ENCODE measurements at regions of chr6 and their contacts with region 1.

Region 1: DNA sequence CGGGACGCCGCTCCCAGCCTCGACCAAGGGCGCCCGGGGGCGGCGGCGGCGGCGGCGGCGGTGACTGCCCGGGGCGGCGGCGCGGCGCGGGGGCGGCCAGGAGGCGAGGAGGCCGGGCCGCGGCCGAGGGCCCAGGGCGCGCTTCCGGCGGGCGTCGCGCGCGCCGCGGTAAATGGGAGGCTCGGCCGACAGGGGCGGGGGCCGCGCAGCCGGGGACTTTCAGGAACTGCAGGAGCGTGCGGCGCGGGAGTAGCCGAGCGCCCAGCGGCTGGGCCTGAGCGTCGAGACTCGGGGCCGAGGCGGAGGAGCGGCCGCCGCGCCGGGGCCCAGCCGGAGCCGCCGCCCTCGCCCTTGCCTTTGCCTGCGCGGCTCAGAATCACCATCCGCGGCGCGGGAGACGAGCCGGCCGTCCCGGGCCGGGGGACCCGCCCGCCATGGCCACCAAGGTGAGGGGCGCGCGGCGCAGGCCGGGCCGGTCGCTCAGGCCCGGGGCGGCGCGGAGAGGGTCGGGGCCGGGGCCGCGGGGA is at the start of gene SNX9:
- DNase-seq: peak; percentile 84
- ATAC-seq: peak; percentile 59
- H3K4me3 Mint-ChIP-seq: peak within 1 kb of the TSS; percentile 92
- H3K27ac Mint-ChIP-seq: peak within 1 kb of the TSS; percentile 99
- H3K4me1 Mint-ChIP-seq: peaks cover 48% of the 10 kb centered on the region
- H3K27me3 Mint-ChIP-seq: peaks cover 11% of the 10 kb centered on the region
- total RNA-seq, gene SNX9: 39.4 to 43.3 TPM

Region 2: DNA sequence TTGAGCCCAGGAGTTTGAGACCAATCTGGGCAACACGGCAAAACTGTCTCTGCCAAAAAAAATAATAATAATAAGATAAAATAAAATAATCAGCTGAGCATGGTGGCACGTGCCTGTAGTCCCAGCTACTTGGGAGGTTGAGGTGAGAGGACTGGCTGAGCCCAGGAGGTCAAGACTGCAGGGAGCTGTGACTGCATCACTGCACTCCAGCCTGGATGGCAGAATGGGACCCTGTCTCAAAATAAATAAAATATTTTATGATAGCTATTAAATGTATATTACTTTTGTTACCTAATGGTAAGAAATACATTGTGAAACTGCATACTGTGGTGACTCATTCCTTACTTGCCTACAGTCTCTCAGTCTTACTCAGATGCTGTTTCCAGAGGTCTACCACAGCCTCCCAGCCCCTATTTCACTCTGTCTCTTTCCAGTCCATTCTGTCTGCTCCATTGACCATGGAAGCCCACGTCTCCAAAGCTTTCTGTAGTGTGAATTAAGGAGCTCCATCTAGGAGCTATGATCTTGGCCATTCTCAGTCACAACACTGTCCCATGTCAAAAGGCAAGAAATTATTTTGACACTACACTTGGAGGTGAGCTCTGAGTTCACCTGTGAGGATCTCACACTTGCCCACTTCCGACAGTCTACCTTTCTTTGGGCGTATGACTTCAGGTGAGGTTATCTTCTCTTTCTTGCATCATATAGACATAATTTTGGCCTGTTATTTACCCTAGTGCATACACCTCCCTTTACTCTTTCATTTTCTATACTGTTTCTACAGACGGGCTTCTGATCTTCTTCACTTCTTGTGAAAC is 22.4 kb before region 1 on chr6:
- CTCF ChIA-PET with region 1: interaction called, 3 read pairs
- POLR2A ChIA-PET with region 1: interaction called, 5 read pairs
- intact Hi-C with region 1: loop called (anchors 1 to 2 kb)
- DNase-seq: peak; percentile 70
- ATAC-seq: peak; percentile 89
- H3K4me3 Mint-ChIP-seq: peak overlapping the region; percentile 41
- H3K27ac Mint-ChIP-seq: peak overlapping the region; percentile 72
- H3K4me1 Mint-ChIP-seq: peaks cover 62% of the 10 kb centered on the region
- H3K27me3 Mint-ChIP-seq: peaks cover 5% of the 10 kb centered on the region

Region 3: DNA sequence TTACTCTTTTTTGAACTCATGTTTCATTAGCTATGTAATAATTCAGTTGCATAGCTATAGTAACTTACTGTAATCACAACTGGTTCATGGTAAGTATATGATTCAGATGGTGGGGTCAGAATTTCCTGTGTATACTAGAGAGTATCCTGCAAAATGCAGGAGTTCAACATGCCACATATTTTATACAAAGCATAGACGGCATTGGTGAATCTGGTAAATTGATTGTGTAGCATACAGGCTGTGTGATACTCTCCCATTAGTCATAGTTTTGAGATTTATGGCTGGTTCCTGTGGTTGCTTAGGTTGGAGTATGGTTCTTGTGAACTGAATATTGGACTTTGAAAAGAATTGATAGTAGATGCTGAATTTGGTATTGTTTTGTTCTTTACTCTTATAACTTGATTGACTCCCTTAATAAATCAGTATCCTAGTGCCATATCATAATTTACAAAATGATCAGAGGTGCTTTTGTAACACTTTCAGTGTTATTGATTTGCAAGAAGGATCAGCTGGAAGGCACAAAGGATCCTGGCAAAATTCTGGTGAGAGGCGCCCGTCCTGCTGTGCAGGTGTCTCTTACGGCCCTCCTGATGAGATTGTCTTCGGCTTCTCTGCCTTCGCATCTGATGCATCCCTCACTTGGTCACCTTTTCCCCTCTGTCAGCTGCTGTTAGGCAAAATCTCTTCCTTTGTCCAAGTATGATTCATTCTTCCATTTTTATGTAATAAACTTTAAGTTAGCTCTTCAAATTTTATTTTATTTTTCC is 22.6 kb after region 1 on chr6:
- CTCF ChIA-PET with region 1: interaction called, 8 read pairs
- POLR2A ChIA-PET with region 1: no interaction called
- intact Hi-C with region 1: loop called in 1 of 2 experiments (anchors 2 kb)
- DNase-seq: no peak
- ATAC-seq: peak; percentile 72
- H3K4me3 Mint-ChIP-seq: no peak overlapping the region
- H3K27ac Mint-ChIP-seq: peak overlapping the region; percentile 72
- H3K4me1 Mint-ChIP-seq: peaks cover 93% of the 10 kb centered on the region
- H3K27me3 Mint-ChIP-seq: no peaks in the 10 kb centered on the region

Region 4: GRCh38 chr6:157861814-157862213 is 38.8 kb after region 1 on chr6:
- CTCF ChIA-PET with region 1: no interaction called
- POLR2A ChIA-PET with region 1: no interaction called
- intact Hi-C with region 1: loop called in 1 of 2 experiments (anchors 1 kb)
- DNase-seq: no peak
- ATAC-seq: no peak
- H3K4me3 Mint-ChIP-seq: no peak overlapping the region
- H3K27ac Mint-ChIP-seq: no peak overlapping the region
- H3K4me1 Mint-ChIP-seq: peaks cover 74% of the 10 kb centered on the region
- H3K27me3 Mint-ChIP-seq: no peaks in the 10 kb centered on the region

Region 5: DNA sequence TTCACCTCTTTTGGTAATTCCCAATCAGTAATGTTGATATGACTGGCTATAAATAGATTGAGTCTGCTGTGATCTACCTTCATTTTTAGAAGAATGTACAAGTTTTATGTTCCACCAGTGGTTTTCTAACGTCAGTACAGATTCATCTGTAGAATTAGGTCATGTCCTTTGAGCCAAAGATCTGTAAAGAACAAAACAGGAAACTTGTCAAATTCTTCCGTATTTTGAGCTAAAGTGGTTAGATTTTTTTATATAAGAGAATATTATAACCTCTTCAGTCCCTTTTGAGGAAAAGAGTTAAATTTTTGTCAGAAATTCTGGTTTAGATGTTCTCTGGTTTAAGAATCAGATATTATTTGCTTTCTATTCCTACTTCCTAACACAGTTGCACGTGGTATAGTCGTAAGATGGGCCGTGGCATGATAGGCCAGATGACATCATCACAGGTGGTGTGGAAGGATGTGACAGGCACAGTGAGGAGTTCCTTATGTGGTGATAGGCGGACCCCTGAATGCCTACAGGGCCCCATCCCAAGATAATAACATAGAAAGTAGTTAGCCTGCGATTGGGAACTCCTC is 62.2 kb after region 1 on chr6:
- CTCF ChIA-PET with region 1: no interaction called
- POLR2A ChIA-PET with region 1: interaction called, 5 read pairs
- intact Hi-C with region 1: loop called (anchors 1 to 2 kb)
- DNase-seq: peak; percentile 78
- ATAC-seq: peak; percentile 89
- H3K4me3 Mint-ChIP-seq: peak overlapping the region; percentile 17
- H3K27ac Mint-ChIP-seq: peak overlapping the region; percentile 92
- H3K4me1 Mint-ChIP-seq: peaks cover 76% of the 10 kb centered on the region
- H3K27me3 Mint-ChIP-seq: no peaks in the 10 kb centered on the region

Region 6: DNA sequence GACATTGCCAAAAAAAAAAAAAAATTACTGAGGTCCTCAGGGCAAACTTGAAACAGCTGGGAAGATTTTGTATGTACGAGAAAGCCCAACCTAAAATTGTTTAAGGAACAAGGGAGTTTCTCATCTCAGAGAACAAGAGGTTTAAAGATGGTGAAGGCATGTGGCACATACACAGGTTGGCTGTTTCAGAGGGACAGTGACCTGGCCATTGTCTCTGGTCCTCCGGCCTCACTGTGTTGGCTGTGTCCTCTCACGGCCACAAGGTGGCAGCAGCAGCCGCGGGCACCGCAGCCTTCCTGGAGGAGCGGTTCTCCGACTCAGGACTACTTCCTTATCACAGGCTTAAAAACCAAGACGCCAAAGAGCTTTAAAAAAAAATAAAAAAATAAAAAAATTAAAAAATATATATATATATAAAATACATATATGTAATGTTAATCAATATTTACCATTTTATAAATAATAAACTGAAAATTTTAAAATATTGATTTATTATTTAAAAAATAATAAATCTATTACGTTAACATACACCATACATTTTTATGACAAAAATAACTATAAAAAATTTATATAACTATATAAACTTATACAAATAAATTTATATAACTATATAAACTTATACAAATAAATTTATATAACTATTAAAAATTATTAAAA is 397.9 kb after region 1 on chr6:
- CTCF ChIA-PET with region 1: no interaction called
- POLR2A ChIA-PET with region 1: no interaction called
- intact Hi-C with region 1: no loop called
- DNase-seq: peak; percentile 86
- ATAC-seq: peak; percentile 97
- H3K4me3 Mint-ChIP-seq: no peak overlapping the region
- H3K27ac Mint-ChIP-seq: no peak overlapping the region
- H3K4me1 Mint-ChIP-seq: peaks cover 4% of the 10 kb centered on the region
- H3K27me3 Mint-ChIP-seq: peaks cover 1% of the 10 kb centered on the region